CD4-positive, alpha-beta T cell (primary cell): ENCODE measurements at regions of chr9 and their contacts with region 1.

Region 1: DNA sequence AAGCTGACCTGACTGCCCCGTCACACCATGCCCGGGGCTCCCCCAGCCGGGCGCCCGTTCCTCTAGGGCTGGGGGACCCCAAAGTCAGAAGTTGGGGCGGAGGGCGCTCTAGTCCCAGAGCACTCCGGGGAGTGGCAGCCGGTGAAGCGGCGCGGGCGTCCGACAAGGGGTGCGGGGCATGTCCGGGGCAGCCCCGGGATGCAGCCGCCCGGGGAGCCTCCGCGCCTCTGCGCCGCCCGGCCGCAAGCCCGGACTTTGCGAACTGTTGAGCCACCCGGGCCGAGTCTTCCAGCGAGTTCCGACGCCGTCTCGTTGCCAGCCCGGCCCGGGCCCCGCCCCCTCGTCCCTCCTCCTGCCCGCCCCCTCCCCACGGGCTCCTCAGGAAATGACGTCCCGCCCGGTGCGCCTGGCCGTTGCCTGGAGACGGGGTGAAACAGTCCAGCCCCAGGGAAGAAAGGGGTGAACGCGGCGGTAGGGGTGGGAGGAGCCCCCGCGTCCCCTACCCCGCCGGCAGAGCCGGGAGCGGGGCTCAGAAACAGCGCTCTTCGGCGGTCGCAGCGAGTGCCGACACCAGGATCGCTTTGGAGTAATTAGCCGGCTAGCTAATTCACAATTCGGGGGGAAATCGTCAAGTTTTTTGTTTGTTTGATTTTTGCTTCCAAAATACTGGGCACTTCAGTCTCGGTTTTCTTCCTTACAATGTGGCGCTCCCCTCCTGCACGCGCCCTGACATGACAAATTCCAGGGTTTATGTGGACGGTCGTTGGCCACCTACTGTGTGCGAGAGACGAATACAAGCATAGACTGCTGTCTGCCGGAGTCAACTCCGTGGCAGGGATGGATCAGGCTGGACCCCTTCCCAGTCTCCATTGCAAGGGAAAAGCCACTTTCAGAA is at the start of gene WHRN:
- DNase-seq: peak; percentile 79 to 97 (median 88)
- ATAC-seq: peak; percentile 86
- H3K4me3 ChIP-seq: peak within 1 kb of the TSS; percentile 67
- H3K4me3 Mint-ChIP-seq: peak within 1 kb of the TSS; percentile 89
- H3K27ac ChIP-seq: peak within 1 kb of the TSS in 1 of 2 donors; percentile 46
- H3K27ac Mint-ChIP-seq: peak within 1 kb of the TSS; percentile 80
- H3K4me1 ChIP-seq: peaks cover 34% of the 10 kb centered on the region
- H3K4me1 Mint-ChIP-seq: peaks cover 37% of the 10 kb centered on the region
- H3K27me3 ChIP-seq: peaks cover 2 to 5% of the 10 kb centered on the region in 2 experiments
- H3K27me3 Mint-ChIP-seq: peaks cover 30% of the 10 kb centered on the region
- CTCF ChIP-seq: no peak
- total RNA-seq, gene WHRN: 19.9 to 20.5 TPM

Region 2: GRCh38 chr9:114385412-114386181 is 119.8 kb before region 1 on chr9:
- CTCF ChIA-PET with region 1: interaction called, 12 read pairs
- POLR2A ChIA-PET with region 1: interaction called, 4 read pairs
- intact Hi-C with region 1: no loop called
- DNase-seq: peak; percentile 74 to 97 (median 82)
- ATAC-seq: peak; percentile 78
- H3K4me3 ChIP-seq: peak overlapping the region; percentile 99
- H3K4me3 Mint-ChIP-seq: peak overlapping the region; percentile 95
- H3K27ac ChIP-seq: peak overlapping the region; percentile 71 to 97
- H3K27ac Mint-ChIP-seq: peak overlapping the region; percentile 98
- H3K4me1 ChIP-seq: peaks cover 85% of the 10 kb centered on the region
- H3K4me1 Mint-ChIP-seq: peaks cover 80% of the 10 kb centered on the region
- H3K27me3 ChIP-seq: no peaks in the 10 kb centered on the region
- H3K27me3 Mint-ChIP-seq: no peaks in the 10 kb centered on the region
- CTCF ChIP-seq: no peak

Region 3: DNA sequence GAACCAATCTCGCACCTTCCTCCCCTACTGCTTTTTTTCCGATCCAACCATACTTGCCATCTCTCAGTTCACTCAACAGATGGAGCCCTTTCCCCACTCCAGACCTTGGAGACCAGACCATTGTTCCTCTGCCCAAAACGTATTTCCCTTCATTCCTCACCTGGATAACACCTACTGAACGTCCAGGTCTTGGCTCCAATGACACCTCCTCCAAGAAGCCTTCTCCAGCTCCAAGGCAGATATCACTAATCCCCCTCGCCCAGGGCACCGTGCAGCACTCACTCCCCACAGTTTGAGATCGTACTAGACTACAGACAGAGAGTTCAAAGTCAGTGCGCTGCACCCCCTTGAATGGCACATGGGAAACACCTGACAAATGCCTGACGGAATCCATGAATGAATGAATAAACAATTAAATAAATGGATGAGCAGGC is 70.5 kb before region 1 on chr9:
- CTCF ChIA-PET with region 1: no interaction called
- POLR2A ChIA-PET with region 1: no interaction called
- intact Hi-C with region 1: loop called in 1 of 2 experiments (anchors 5 kb)
- DNase-seq: peak in 4 of 14 experiments; percentile 16 to 47 (median 31)
- ATAC-seq: no peak
- H3K4me3 ChIP-seq: no peak overlapping the region
- H3K4me3 Mint-ChIP-seq: no peak overlapping the region
- H3K27ac ChIP-seq: no peak overlapping the region
- H3K27ac Mint-ChIP-seq: no peak overlapping the region
- H3K4me1 ChIP-seq: peaks cover 9% of the 10 kb centered on the region
- H3K4me1 Mint-ChIP-seq: peaks cover 5% of the 10 kb centered on the region
- H3K27me3 ChIP-seq: no peaks in the 10 kb centered on the region
- H3K27me3 Mint-ChIP-seq: no peaks in the 10 kb centered on the region
- CTCF ChIP-seq: peak; percentile 45

Region 4: GRCh38 chr9:114653556-114654159 is 148.2 kb after region 1 on chr9:
- CTCF ChIA-PET with region 1: interaction called, 14 read pairs
- POLR2A ChIA-PET with region 1: interaction called, 4 read pairs
- intact Hi-C with region 1: loop called in 1 of 2 experiments (anchors 5 kb)
- DNase-seq: peak; percentile 59 to 89 (median 82)
- ATAC-seq: peak; percentile 99
- H3K4me3 ChIP-seq: no peak overlapping the region
- H3K4me3 Mint-ChIP-seq: no peak overlapping the region
- H3K27ac ChIP-seq: no peak overlapping the region
- H3K27ac Mint-ChIP-seq: peak overlapping the region; percentile 30
- H3K4me1 ChIP-seq: peaks cover 8% of the 10 kb centered on the region
- H3K4me1 Mint-ChIP-seq: peaks cover 21% of the 10 kb centered on the region
- H3K27me3 ChIP-seq: no peaks in the 10 kb centered on the region
- H3K27me3 Mint-ChIP-seq: no peaks in the 10 kb centered on the region
- CTCF ChIP-seq: peak; percentile 88